Ascending aorta (tissue), 2 donors: ENCODE measurements at regions of chr12 and their contacts with region 1.

Region 1: DNA sequence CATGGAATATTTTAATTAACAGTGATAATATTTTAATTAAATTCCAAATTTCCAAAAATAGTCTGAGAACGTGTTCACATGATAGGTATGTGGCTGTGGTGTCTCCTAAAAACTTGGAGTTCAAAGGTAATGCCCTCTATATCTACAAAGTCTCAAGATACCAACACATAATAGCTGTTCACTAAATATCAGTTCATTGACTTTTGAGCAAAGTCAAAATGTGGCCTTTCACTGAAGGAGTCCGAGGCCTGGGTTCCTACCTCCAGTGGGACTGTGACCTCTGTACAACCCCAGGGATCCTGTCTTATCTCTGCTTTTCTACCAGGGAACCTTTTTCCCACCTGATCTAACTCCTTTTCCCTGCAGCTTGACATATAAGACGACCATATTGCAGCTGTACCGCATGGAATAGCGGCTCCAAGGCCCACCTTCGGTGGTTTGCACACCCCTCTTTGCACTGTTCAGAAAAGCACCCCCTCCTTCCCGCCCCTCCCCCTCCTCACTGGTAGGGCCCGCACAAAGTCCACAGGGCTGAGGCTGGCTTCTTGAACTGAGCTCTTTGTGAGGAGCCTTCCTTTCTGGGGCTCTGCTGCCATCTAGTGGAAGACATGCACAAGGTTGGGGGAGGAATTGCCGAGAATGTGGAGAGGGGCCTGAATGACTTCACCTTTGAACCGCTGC is 3.1 kb downstream of the CCND2 start:
- DNase-seq: peak; percentile 63 to 95
- H3K4me3 ChIP-seq: peak overlapping the region; percentile 78 to 87
- H3K27ac ChIP-seq: peak overlapping the region; percentile 92 to 96
- H3K4me1 ChIP-seq: peaks cover 12 to 50% of the 10 kb centered on the region in 2 donors
- H3K27me3 ChIP-seq: no peaks in the 10 kb centered on the region
- CTCF ChIP-seq: peak; percentile 90 to 96 (median 92)

Region 2: DNA sequence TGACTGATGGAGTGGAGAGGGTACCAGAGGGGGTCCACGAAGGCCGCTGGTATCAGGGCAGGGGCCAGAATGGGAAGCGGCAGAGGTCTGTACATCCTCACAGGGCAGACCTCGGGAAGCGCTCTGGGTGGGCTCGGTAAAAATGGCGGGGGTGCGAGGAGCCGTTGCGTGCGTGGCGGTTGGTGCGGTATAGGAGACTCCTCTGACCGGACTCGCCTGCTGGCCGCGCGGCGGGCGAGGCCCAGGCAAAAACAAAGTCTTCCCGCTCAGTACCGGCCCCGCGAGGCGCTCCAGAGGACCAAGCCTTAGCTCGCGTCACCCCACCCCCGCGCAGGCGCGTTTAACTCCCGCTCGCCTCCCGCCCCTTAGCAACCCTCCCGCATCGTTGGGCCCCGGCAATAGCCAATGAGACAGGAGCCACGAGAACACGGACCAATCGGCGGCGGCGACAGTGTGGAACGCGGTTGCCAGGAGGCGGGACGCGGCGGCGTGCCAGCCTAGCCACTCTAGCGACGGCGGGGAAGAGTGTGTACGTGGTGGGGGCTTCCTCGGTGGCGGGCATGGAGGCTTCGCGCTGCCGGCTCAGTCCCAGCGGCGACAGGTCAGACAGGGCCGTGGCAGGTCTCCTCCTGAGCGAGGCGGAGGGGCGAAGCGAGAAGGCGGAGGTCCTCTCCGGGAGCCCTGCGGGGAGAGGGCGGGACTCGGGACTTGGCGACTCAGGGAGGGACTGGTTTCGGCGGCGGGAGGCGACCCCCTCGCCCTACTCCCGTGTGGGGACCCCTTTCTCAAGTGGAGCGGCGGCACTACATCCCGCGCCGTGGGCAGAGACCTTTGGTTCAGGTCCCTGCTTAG is 1386.0 kb before region 1 on chr12 and contains the start of gene TULP3:
- intact Hi-C with region 1: loop called (anchors 10 kb)
- DNase-seq: peak; percentile 96 to 99
- H3K4me3 ChIP-seq: peak within 1 kb of the TSS; percentile 62 to 93
- H3K27ac ChIP-seq: peak within 1 kb of the TSS; percentile 94 to 97
- H3K4me1 ChIP-seq: peaks cover 0 to 26% of the 10 kb centered on the region in 2 donors
- H3K27me3 ChIP-seq: no peaks in the 10 kb centered on the region
- CTCF ChIP-seq: no peak
- total RNA-seq, gene TULP3: 24.8 TPM

Region 3: GRCh38 chr12:3872800-3873636 is 403.6 kb before region 1 on chr12 and contains the start of gene PARP11:
- intact Hi-C with region 1: loop called (anchors 2 kb)
- DNase-seq: peak; percentile 93 to 99
- H3K4me3 ChIP-seq: peak within 1 kb of the TSS; percentile 49 to 80
- H3K27ac ChIP-seq: peak within 1 kb of the TSS; percentile 93 to 94
- H3K4me1 ChIP-seq: peaks cover 4 to 13% of the 10 kb centered on the region in 2 donors
- H3K27me3 ChIP-seq: no peaks in the 10 kb centered on the region
- CTCF ChIP-seq: no peak
- total RNA-seq, gene PARP11: 4.2 TPM

Region 4: GRCh38 chr12:3998968-3999826 is 277.5 kb before region 1 on chr12:
- intact Hi-C with region 1: loop called (anchors 2 kb)
- DNase-seq: no peak
- H3K4me3 ChIP-seq: no peak overlapping the region
- H3K27ac ChIP-seq: no peak overlapping the region
- H3K4me1 ChIP-seq: no peaks in the 10 kb centered on the region
- H3K27me3 ChIP-seq: no peaks in the 10 kb centered on the region
- CTCF ChIP-seq: no peak

Region 5: GRCh38 chr12:4107436-4107878 is 169.2 kb before region 1 on chr12:
- intact Hi-C with region 1: loop called (anchors 1 kb)
- DNase-seq: peak in 1 of 2 donors; percentile 73
- H3K4me3 ChIP-seq: no peak overlapping the region
- H3K27ac ChIP-seq: no peak overlapping the region
- H3K4me1 ChIP-seq: no peaks in the 10 kb centered on the region
- H3K27me3 ChIP-seq: no peaks in the 10 kb centered on the region
- CTCF ChIP-seq: peak; percentile 21 to 53 (median 50)

Region 6: DNA sequence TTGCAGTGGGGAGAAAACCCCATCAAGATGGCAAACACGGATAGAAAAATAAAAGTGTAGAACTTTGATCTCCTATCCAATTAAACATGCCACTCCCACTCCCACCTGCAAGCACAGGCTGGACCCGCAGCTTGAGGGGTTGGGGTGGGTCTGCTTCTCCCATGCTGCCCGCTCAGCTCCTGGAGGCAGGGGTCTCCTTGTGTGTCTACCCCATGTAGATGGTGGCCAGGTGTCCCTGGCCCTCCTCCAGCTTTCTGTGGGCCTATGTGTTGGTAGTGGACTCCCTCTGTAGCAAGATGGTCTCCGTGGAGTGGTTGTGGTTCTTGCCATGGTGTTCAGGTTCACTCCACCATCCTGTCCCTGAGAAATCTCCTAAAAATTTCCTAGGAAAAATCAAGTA is 126.3 kb after region 1 on chr12:
- intact Hi-C with region 1: no loop called
- DNase-seq: no peak
- H3K4me3 ChIP-seq: no peak overlapping the region
- H3K27ac ChIP-seq: no peak overlapping the region
- H3K4me1 ChIP-seq: no peaks in the 10 kb centered on the region
- H3K27me3 ChIP-seq: no peaks in the 10 kb centered on the region
- CTCF ChIP-seq: no peak

Region 7: GRCh38 chr12:4562034-4562657 is 285.5 kb after region 1 on chr12 and contains the start of gene DYRK4:
- intact Hi-C with region 1: no loop called
- DNase-seq: peak; percentile 23 to 75
- H3K4me3 ChIP-seq: peak within 1 kb of the TSS; percentile 1 to 60
- H3K27ac ChIP-seq: no peak within 1 kb of the TSS
- H3K4me1 ChIP-seq: peaks cover 0 to 7% of the 10 kb centered on the region in 2 donors
- H3K27me3 ChIP-seq: no peaks in the 10 kb centered on the region
- CTCF ChIP-seq: no peak
- total RNA-seq, gene DYRK4: 60.7 TPM

Region 8: GRCh38 chr12:4771960-4772566 is 495.4 kb after region 1 on chr12:
- intact Hi-C with region 1: no loop called
- DNase-seq: no peak
- H3K4me3 ChIP-seq: no peak overlapping the region
- H3K27ac ChIP-seq: no peak overlapping the region
- H3K4me1 ChIP-seq: peaks cover 0 to 5% of the 10 kb centered on the region in 2 donors
- H3K27me3 ChIP-seq: no peaks in the 10 kb centered on the region
- CTCF ChIP-seq: no peak

Region 9: GRCh38 chr12:5678176-5678575 is 1401.5 kb after region 1 on chr12:
- intact Hi-C with region 1: no loop called
- DNase-seq: no peak
- H3K4me3 ChIP-seq: no peak overlapping the region
- H3K27ac ChIP-seq: no peak overlapping the region
- H3K4me1 ChIP-seq: no peaks in the 10 kb centered on the region
- H3K27me3 ChIP-seq: no peaks in the 10 kb centered on the region
- CTCF ChIP-seq: no peak